CD8-positive, alpha-beta T cell (primary cell): ENCODE measurements at regions of chr6 and their contacts with region 1.

Region 1: GRCh38 chr6:118881440-118882313 is 12.3 kb upstream of the ASF1A start:
- DNase-seq: no peak
- ATAC-seq: no peak
- H3K4me3 ChIP-seq: no peak overlapping the region
- H3K4me3 Mint-ChIP-seq: peak overlapping the region; percentile 27
- H3K27ac ChIP-seq: no peak overlapping the region
- H3K27ac Mint-ChIP-seq: no peak overlapping the region
- H3K4me1 ChIP-seq: peaks cover 23% of the 10 kb centered on the region
- H3K4me1 Mint-ChIP-seq: peaks cover 72% of the 10 kb centered on the region
- H3K27me3 ChIP-seq: no peaks in the 10 kb centered on the region
- H3K27me3 Mint-ChIP-seq: no peaks in the 10 kb centered on the region
- CTCF ChIP-seq: no peak

Region 2: GRCh38 chr6:118844915-118845314 is 36.8 kb before region 1 on chr6:
- CTCF ChIA-PET with region 1: interaction called, 3 read pairs
- POLR2A ChIA-PET with region 1: interaction called, 5 read pairs
- intact Hi-C with region 1: loop called in 1 of 2 experiments (anchors 5 kb)
- DNase-seq: no peak
- ATAC-seq: peak; percentile 26
- H3K4me3 ChIP-seq: no peak overlapping the region
- H3K4me3 Mint-ChIP-seq: peak overlapping the region; percentile 38
- H3K27ac ChIP-seq: no peak overlapping the region
- H3K27ac Mint-ChIP-seq: no peak overlapping the region
- H3K4me1 ChIP-seq: no peaks in the 10 kb centered on the region
- H3K4me1 Mint-ChIP-seq: peaks cover 24% of the 10 kb centered on the region
- H3K27me3 ChIP-seq: no peaks in the 10 kb centered on the region
- H3K27me3 Mint-ChIP-seq: no peaks in the 10 kb centered on the region
- CTCF ChIP-seq: no peak